ENCODE measurements at regions of chr3 and their contacts with region 1.

Region 1: GRCh38 chr3:70531063-70531657 is 218.7 kb upstream of the MDFIC2 start:
- ATAC-seq: no peak
- H3K4me3 ChIP-seq: no peak overlapping the region
- H3K27ac ChIP-seq: no peak overlapping the region
- H3K4me1 ChIP-seq: peaks cover 0 to 17% of the 10 kb centered on the region in 2 donors

Region 2: GRCh38 chr3:70090322-70090913 is 440.7 kb before region 1 on chr3:
- in situ Hi-C with region 1: loop called in 1 of 9 experiments (anchors 25 kb)
- ATAC-seq: peak in 1 of 8 experiments; percentile 23
- H3K4me3 ChIP-seq: no peak overlapping the region
- H3K27ac ChIP-seq: no peak overlapping the region
- H3K4me1 ChIP-seq: peaks cover 7 to 17% of the 10 kb centered on the region in 2 donors

Region 3: DNA sequence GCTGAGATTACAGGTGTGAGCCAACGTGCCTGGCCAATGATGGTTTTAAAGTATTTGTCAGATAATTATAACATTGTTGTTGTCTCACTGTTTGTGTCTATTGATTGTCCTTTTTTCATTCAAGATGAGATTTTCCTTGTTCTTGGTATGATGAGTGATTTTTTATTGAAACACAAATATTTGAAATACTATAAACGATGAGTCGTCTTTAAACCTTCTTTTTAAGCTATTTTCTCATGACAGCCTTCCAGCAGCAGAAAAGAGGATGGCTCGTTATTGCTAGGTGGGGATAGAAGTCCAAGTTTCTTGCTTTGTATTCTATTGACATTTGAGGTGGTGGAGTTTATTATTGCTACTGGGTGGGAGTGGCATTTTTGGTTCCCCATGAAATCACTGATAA is 157.0 kb before region 1 on chr3:
- in situ Hi-C with region 1: no loop called
- ATAC-seq: no peak
- H3K4me3 ChIP-seq: no peak overlapping the region
- H3K27ac ChIP-seq: no peak overlapping the region
- H3K4me1 ChIP-seq: no peaks in the 10 kb centered on the region

Region 4: GRCh38 chr3:71006810-71007785 is 475.9 kb after region 1 on chr3:
- in situ Hi-C with region 1: loop called in 1 of 9 experiments (anchors 25 kb)
- ATAC-seq: peak in 2 of 8 experiments; percentile 34 to 80
- H3K4me3 ChIP-seq: no peak overlapping the region
- H3K27ac ChIP-seq: no peak overlapping the region
- H3K4me1 ChIP-seq: peaks cover 6 to 59% of the 10 kb centered on the region in 2 donors

Region 5: GRCh38 chr3:71360764-71361163 is 829.6 kb after region 1 on chr3:
- in situ Hi-C with region 1: no loop called
- ATAC-seq: no peak
- H3K4me3 ChIP-seq: no peak overlapping the region
- H3K27ac ChIP-seq: no peak overlapping the region
- H3K4me1 ChIP-seq: peaks cover 10 to 23% of the 10 kb centered on the region in 2 donors

Region 6: DNA sequence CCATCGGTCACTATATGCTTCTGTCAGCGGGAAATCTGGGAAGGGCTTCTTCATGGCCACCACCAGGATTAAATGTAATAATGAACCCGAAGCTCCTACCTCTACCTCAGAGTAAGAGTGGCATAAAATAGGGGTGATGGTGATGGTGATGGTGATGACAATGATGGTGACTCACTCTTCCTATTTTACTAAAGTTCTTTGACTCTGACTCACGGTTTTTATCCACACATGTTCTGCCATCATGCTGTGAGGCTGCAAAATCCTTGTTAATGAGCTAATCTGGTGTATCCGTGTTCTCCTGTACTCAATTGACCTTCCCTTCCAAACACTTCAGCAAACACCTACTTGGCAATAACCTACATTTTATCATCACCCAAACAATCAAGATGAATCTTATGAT is 1070.7 kb after region 1 on chr3:
- in situ Hi-C with region 1: loop called in 4 of 9 experiments (anchors 25 kb)
- ATAC-seq: peak in 2 of 8 experiments; percentile 68 to 79
- H3K4me3 ChIP-seq: no peak overlapping the region
- H3K27ac ChIP-seq: no peak overlapping the region
- H3K4me1 ChIP-seq: no peaks in the 10 kb centered on the region